Ascending aorta (tissue), 2 donors: ENCODE measurements at regions of chr15 and their contacts with region 1.

Region 1: GRCh38 chr15:34721802-34722795 is 32.7 kb downstream of the GJD2 start:
- DNase-seq: peak; percentile 61 to 94
- H3K4me3 ChIP-seq: peak overlapping the region; percentile 35 to 41
- H3K27ac ChIP-seq: peak overlapping the region; percentile 86 to 93
- H3K4me1 ChIP-seq: peaks cover 0 to 51% of the 10 kb centered on the region in 2 donors
- H3K27me3 ChIP-seq: no peaks in the 10 kb centered on the region
- CTCF ChIP-seq: peak; percentile 10 to 46 (median 25)

Region 2: GRCh38 chr15:34665498-34666116 is 56.5 kb before region 1 on chr15:
- intact Hi-C with region 1: no loop called
- DNase-seq: no peak
- H3K4me3 ChIP-seq: no peak overlapping the region
- H3K27ac ChIP-seq: no peak overlapping the region
- H3K4me1 ChIP-seq: no peaks in the 10 kb centered on the region
- H3K27me3 ChIP-seq: no peaks in the 10 kb centered on the region
- CTCF ChIP-seq: no peak

Region 3: GRCh38 chr15:34855397-34855796 is 133.3 kb after region 1 on chr15:
- intact Hi-C with region 1: loop called (anchors 5 kb)
- DNase-seq: no peak
- H3K4me3 ChIP-seq: peak overlapping the region in 1 of 2 donors; percentile 3
- H3K27ac ChIP-seq: peak overlapping the region; percentile 64 to 71
- H3K4me1 ChIP-seq: peaks cover 9 to 30% of the 10 kb centered on the region in 2 donors
- H3K27me3 ChIP-seq: no peaks in the 10 kb centered on the region
- CTCF ChIP-seq: no peak

Region 4: GRCh38 chr15:34987985-34988873 is 266.1 kb after region 1 on chr15 and contains the start of gene ZNF770:
- intact Hi-C with region 1: loop called (anchors 5 kb)
- DNase-seq: peak in 1 of 2 donors; percentile 86
- H3K4me3 ChIP-seq: peak within 1 kb of the TSS; percentile 71 to 85
- H3K27ac ChIP-seq: peak within 1 kb of the TSS; percentile 95 to 97
- H3K4me1 ChIP-seq: peaks cover 0 to 24% of the 10 kb centered on the region in 2 donors
- H3K27me3 ChIP-seq: no peaks in the 10 kb centered on the region
- CTCF ChIP-seq: no peak
- total RNA-seq, gene ZNF770: 87.7 TPM